ENCODE measurements at regions of chr22 and their contacts with region 1.

Region 1: GRCh38 chr22:24011735-24012068 is 598 bp downstream of the CABIN1 start:
- DNase-seq: no peak
- ATAC-seq: no peak; the same call in 1 of the 2 replicates
- H3K4me3 ChIP-seq: peak overlapping the region; percentile 52
- H3K27ac ChIP-seq: peak overlapping the region; percentile 13
- H3K4me1 ChIP-seq: peaks cover 3% of the 10 kb centered on the region; the same call in 1 of the 2 replicates
- H3K27me3 ChIP-seq: no peaks in the 10 kb centered on the region; the same call in 1 of the 2 replicates
- CTCF ChIP-seq: no peak
- POLR2A ChIP-seq: no peak
- RAD21 ChIP-seq: no peak

Region 2: DNA sequence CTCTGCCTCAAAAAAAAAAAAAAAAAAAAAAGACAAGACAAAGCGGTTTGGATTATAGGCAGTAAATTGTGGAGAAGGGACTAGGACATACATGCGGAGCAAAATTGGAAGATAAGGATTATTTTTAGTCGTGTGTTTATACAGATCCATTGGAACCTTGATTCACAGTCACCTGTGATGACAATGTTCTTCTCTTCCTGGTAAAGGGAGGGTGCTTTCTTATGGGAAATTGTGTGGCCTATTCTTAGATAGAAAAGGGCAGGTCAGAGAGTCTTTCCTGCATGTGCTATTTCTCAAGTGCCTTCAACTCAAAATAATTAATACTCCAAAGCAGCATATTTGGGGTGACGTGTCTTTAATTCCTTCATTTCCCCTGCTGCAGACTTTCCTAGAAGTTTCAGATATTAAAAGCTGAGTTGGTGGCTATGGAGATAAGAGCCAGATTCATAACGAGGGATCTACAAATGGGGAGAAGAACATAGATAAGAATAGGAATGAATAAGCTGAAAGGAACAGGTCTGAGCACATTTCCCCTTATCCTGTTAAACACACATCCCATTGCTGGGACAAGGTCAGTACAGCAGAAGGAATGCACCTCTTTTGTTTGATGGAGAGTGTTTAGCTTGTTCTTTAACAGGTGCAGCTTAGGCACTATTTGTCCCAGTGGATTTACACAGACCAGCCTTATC is 73.2 kb before region 1 on chr22:
- CTCF ChIA-PET with region 1: no interaction called
- POLR2A ChIA-PET with region 1: no interaction called
- dilution Hi-C with region 1: no loop called
- in situ Hi-C with region 1: no loop called
- intact Hi-C with region 1: no loop called
- DNase-seq: no peak
- ATAC-seq: no peak
- H3K4me3 ChIP-seq: no peak overlapping the region
- H3K27ac ChIP-seq: no peak overlapping the region
- H3K4me1 ChIP-seq: no peaks in the 10 kb centered on the region
- H3K27me3 ChIP-seq: peaks cover 5% of the 10 kb centered on the region
- CTCF ChIP-seq: no peak
- POLR2A ChIP-seq: no peak
- RAD21 ChIP-seq: no peak

Region 3: DNA sequence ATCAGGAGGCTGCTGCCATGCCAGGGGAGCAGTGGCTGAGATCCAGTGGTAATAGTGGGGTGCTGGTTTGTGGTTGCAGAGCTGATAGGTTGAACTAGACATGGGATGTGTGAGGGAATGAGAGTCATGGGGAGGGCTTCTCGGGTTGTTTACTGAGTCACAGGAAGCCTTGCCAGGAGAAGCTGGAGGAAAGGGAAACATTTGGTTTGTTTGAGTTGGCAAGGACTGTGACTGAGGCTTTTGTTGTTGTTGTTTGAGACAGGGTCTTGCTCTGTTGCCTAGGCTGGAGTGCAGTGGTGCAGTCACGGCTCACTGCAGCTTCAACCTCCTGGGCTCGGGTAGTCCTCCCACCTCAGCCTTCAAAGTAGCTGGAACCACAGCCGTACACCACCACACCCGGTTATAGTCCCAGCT is 48.7 kb after region 1 on chr22:
- CTCF ChIA-PET with region 1: no interaction called
- POLR2A ChIA-PET with region 1: no interaction called
- dilution Hi-C with region 1: no loop called
- in situ Hi-C with region 1: no loop called
- intact Hi-C with region 1: loop called (anchors 1 kb)
- DNase-seq: peak; percentile 96
- ATAC-seq: peak; percentile 77
- H3K4me3 ChIP-seq: no peak overlapping the region
- H3K27ac ChIP-seq: peak overlapping the region; percentile 89
- H3K4me1 ChIP-seq: peaks cover 22% of the 10 kb centered on the region
- H3K27me3 ChIP-seq: no peaks in the 10 kb centered on the region
- CTCF ChIP-seq: no peak
- POLR2A ChIP-seq: no peak
- RAD21 ChIP-seq: no peak

Region 4: GRCh38 chr22:24088816-24089215 is 77.1 kb after region 1 on chr22:
- CTCF ChIA-PET with region 1: no interaction called
- POLR2A ChIA-PET with region 1: no interaction called
- dilution Hi-C with region 1: no loop called
- in situ Hi-C with region 1: no loop called
- intact Hi-C with region 1: loop called (anchors 10 kb)
- DNase-seq: peak; percentile 55
- ATAC-seq: peak; percentile 84
- H3K4me3 ChIP-seq: no peak overlapping the region
- H3K27ac ChIP-seq: no peak overlapping the region
- H3K4me1 ChIP-seq: peaks cover 8% of the 10 kb centered on the region
- H3K27me3 ChIP-seq: no peaks in the 10 kb centered on the region
- CTCF ChIP-seq: 0 out of 2 replicates have a peak, but pooled peaks have one; percentile 2
- POLR2A ChIP-seq: no peak
- RAD21 ChIP-seq: no peak

Region 5: DNA sequence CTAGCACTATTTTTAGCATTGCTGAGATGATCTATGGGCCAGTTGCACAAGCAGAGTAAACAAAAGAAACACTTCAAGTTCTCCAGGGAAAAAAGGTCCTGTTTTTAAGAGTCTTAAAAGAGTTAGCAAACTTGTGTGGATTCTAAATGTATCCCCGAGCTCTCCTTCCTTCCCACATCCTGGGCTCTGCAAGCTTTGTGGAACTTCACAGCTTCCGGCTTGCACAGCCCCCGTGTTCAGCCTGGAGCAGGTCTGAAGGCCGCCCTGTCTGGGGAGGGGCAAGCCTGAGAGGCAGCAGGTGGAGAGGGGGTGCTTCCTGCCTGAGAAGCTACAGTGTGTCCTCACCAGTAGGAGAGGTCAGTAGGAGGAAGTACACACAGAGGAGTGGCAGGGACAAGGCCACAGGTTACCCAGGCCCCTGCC is 134.5 kb after region 1 on chr22:
- CTCF ChIA-PET with region 1: no interaction called
- POLR2A ChIA-PET with region 1: no interaction called
- dilution Hi-C with region 1: no loop called
- in situ Hi-C with region 1: no loop called
- intact Hi-C with region 1: loop called (anchors 2 kb)
- DNase-seq: peak; percentile 83
- ATAC-seq: peak; percentile 13
- H3K4me3 ChIP-seq: no peak overlapping the region
- H3K27ac ChIP-seq: peak overlapping the region; percentile 85
- H3K4me1 ChIP-seq: peaks cover 54% of the 10 kb centered on the region
- H3K27me3 ChIP-seq: no peaks in the 10 kb centered on the region
- CTCF ChIP-seq: no peak
- POLR2A ChIP-seq: no peak
- RAD21 ChIP-seq: no peak